ENCODE measurements at regions of chr6 and their contacts with region 1.

Region 1: GRCh38 chr6:93371756-93372155 is 47.6 kb downstream of the EPHA7 start:
- DNase-seq: no peak
- ATAC-seq: no peak

Region 2: GRCh38 chr6:93299622-93300021 is 72.1 kb before region 1 on chr6:
- intact Hi-C with region 1: loop called (anchors 2 kb)
- DNase-seq: no peak
- ATAC-seq: no peak

Region 3: DNA sequence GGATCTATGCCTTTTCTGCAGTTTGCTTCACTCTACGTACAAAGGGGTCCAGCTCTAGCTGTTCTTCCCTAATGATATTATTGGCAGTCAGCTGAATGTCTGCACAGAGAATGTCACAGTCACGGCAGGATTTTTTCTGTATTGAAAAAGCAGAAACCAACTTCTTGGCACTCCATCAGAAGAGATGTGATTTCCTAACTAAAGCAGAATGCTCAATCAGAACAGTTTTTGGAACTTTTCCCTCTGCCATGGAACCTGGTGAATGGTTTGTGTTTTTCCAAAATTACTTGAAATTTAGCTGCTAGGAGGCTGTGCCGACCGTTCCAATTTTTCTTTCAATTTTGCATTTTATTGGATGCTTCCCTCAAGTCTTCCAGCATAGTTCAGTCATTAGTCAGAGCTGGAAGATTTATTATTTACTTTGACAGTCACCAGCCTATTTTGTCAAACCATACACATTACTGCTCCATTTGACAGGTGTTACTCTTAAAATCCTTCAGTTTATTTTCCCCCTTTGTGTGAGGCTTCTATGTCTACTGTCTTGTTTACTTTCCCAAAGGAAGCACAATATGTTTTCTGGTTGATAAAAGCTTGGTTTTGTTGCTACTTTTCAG is 307.2 kb after region 1 on chr6:
- intact Hi-C with region 1: no loop called
- DNase-seq: no peak
- ATAC-seq: no peak

Measured in sciatic nerve (tissue), 2 donors.